MCF 10A (cell line): ENCODE measurements at regions of chr1 and their contacts with region 1.

Region 1: GRCh38 chr1:167708940-167709389 is 12.8 kb upstream of the MPZL1 start:
- DNase-seq: no peak
- H3K4me3 Mint-ChIP-seq: no peak overlapping the region
- H3K27ac Mint-ChIP-seq: no peak overlapping the region
- H3K4me1 Mint-ChIP-seq: peaks cover 8% of the 10 kb centered on the region
- H3K27me3 Mint-ChIP-seq: peaks cover 6% of the 10 kb centered on the region
- CTCF ChIP-seq: no peak

Region 2: DNA sequence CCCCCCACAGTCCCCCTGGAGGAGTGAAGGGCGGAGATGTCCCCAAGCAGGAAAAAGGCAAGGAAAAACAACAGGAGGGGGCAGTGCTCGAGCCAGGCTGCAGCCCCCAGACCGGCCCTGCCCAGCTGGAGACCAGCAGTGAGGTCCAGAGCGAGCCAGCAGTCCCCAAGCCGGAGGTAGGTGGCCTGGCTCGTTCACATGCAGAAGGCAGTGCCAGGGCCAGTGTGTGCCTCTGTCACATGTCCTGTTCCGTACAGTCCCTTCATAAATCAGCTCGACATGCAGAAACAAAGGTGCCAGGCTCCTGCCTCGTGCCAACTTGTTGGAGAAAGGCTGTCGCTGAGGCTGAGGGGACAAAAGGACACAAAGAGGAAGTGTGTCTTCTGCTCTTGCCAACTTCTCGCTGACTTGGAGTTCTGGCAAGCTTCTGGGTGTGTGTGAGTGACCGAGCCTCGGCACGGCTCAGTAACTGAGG is 11.3 kb before region 1 on chr1:
- CTCF ChIA-PET with region 1: interaction called, 16 read pairs
- POLR2A ChIA-PET with region 1: interaction called, 5 read pairs
- intact Hi-C with region 1: no loop called
- DNase-seq: no peak
- H3K4me3 Mint-ChIP-seq: no peak overlapping the region
- H3K27ac Mint-ChIP-seq: no peak overlapping the region
- H3K4me1 Mint-ChIP-seq: peaks cover 6% of the 10 kb centered on the region
- H3K27me3 Mint-ChIP-seq: peaks cover 3% of the 10 kb centered on the region
- CTCF ChIP-seq: no peak